ENCODE measurements at regions of chr15 and their contacts with region 1.

Region 1: GRCh38 chr15:38474155-38474757 is 20.3 kb downstream of the FAM98B start:
- DNase-seq: peak in 1 of 2 donors; percentile 22
- H3K4me3 ChIP-seq: no peak overlapping the region
- CTCF ChIP-seq: no peak
- POLR2A ChIP-seq: no peak

Region 2: DNA sequence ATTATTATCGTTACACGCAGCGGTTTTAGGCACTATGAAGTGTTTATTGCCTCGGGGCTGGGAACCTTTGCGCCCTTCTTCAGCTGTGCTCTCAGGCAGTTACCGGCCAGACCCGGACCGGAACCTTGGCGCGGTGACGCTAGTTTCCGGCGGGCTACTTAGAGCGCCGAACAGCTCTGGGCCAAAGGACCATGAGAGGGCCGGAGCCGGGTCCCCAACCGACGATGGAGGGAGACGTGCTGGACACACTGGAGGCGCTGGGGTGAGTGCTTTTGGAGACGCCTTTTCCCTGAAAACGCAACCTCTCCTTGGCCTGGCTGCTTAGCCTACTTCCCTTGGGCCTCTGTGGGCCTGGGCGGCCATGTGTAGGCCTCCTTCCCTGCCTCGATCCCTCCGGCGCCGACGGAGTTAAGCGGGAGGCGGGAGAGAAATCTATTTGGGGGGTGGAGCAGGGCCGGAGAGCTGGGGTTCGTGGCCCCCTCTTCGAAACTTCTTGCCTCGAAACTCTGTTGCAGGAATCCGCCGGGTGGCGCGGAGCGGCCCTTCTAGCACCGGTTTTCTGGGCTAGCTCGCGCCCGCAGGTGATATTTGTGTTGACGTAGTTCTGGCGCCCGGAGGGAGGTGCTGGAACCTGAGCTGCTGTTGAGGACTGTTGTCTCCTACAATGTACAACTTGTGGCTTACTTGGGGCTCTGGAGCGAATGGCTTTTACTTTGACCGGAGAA is 20.1 kb before region 1 on chr15 and contains the start of gene FAM98B:
- intact Hi-C with region 1: no loop called
- DNase-seq: peak; percentile 83 to 98
- H3K4me3 ChIP-seq: peak within 1 kb of the TSS; percentile 96
- CTCF ChIP-seq: no peak
- POLR2A ChIP-seq: no peak
- total RNA-seq, gene FAM98B: 4.8 to 14.4 (median 9.7) TPM

Region 3: GRCh38 chr15:38690689-38691332 is 216.6 kb after region 1 on chr15:
- intact Hi-C with region 1: loop called (anchors 5 kb)
- DNase-seq: peak; percentile 53 to 90
- H3K4me3 ChIP-seq: no peak overlapping the region
- CTCF ChIP-seq: no peak
- POLR2A ChIP-seq: no peak

Region 4: DNA sequence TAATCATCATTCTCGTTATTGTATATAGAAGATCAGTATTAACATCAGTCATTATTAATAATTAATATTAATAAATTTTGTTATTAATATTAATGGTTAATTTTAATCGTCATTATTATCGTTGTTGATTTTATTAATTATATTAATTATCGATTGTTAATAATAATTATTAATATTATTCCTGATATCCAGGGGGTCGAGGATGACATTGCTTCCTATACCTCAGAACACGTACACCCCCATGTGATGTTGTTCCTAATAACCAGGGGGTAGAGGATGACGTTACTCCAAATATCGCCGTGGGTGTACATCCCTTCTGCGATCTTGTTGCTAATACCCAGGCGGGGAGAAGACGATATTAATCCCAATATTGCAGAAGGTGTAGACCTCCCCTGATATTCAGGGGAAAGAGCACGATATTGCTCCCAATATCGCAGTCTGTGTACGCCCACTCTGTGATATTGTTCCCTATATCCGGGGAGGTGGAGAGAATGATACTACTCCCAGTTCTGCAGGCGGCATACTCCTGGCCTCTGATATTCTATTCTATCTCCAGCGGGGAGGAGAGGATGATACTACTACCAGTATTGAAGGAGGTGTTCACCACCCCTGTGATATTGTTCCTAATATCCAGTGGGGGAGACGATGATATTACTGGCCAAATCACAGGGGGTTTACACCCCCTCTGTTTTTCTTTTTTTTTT is 1656.7 kb after region 1 on chr15:
- intact Hi-C with region 1: no loop called
- DNase-seq: no peak
- H3K4me3 ChIP-seq: no peak overlapping the region
- CTCF ChIP-seq: no peak
- POLR2A ChIP-seq: no peak

Measured in lower leg skin (tissue), 4 donors.